ENCODE measurements at regions of chr4 and their contacts with region 1.

Region 1: GRCh38 chr4:158253350-158253980 is 43.2 kb downstream of the TMEM144 start:
- DNase-seq: peak; percentile 71
- H3K4me3 ChIP-seq: no peak overlapping the region
- H3K27ac ChIP-seq: no peak overlapping the region
- H3K27me3 ChIP-seq: no peaks in the 10 kb centered on the region
- CTCF ChIP-seq: peak; percentile 77

Region 2: GRCh38 chr4:157075811-157076577 is 1177.5 kb before region 1 on chr4 and contains the start of gene GLRB:
- in situ Hi-C with region 1: no loop called
- DNase-seq: no peak
- H3K4me3 ChIP-seq: peak within 1 kb of the TSS; percentile 82
- H3K27ac ChIP-seq: no peak within 1 kb of the TSS
- H3K27me3 ChIP-seq: no peaks in the 10 kb centered on the region
- CTCF ChIP-seq: no peak

Region 3: GRCh38 chr4:157992038-157992705 is 261.3 kb before region 1 on chr4:
- in situ Hi-C with region 1: no loop called
- DNase-seq: peak; percentile 75
- H3K4me3 ChIP-seq: peak overlapping the region; percentile 22
- H3K27ac ChIP-seq: no peak overlapping the region
- H3K27me3 ChIP-seq: no peaks in the 10 kb centered on the region
- CTCF ChIP-seq: peak; percentile 44

Region 4: GRCh38 chr4:158624889-158625478 is 371.5 kb after region 1 on chr4:
- in situ Hi-C with region 1: loop called (anchors 25 kb)
- DNase-seq: no peak
- H3K4me3 ChIP-seq: no peak overlapping the region
- H3K27ac ChIP-seq: no peak overlapping the region
- H3K27me3 ChIP-seq: no peaks in the 10 kb centered on the region
- CTCF ChIP-seq: peak; percentile 67

Region 5: GRCh38 chr4:158682066-158682465 is 428.6 kb after region 1 on chr4:
- in situ Hi-C with region 1: no loop called
- DNase-seq: no peak
- H3K4me3 ChIP-seq: no peak overlapping the region
- H3K27ac ChIP-seq: no peak overlapping the region
- H3K27me3 ChIP-seq: no peaks in the 10 kb centered on the region
- CTCF ChIP-seq: no peak

Region 6: DNA sequence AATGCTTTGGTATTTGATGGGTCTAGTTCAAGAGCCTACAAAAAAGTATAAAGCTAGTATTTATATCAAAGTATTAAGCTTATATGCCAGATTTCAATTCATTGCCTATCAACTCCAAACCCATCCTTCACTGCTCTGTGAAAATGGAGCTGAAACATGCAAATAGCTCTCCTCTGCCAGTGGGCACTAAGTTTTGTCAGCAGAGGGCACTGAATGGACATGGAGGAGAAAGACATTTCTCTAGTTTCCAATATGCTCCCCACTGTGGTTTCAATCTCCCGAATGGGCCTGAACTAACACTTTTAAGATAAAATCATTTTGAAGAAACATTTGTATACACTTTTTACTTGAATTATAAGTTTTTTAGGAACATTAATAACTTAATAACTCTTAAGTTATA is 457.3 kb after region 1 on chr4:
- in situ Hi-C with region 1: no loop called
- DNase-seq: no peak
- H3K4me3 ChIP-seq: no peak overlapping the region
- H3K27ac ChIP-seq: no peak overlapping the region
- H3K27me3 ChIP-seq: no peaks in the 10 kb centered on the region
- CTCF ChIP-seq: peak; percentile 42

Measured in brain microvascular endothelial cell (primary cell).